ENCODE measurements at regions of chr3 and their contacts with region 1.

Region 1: DNA sequence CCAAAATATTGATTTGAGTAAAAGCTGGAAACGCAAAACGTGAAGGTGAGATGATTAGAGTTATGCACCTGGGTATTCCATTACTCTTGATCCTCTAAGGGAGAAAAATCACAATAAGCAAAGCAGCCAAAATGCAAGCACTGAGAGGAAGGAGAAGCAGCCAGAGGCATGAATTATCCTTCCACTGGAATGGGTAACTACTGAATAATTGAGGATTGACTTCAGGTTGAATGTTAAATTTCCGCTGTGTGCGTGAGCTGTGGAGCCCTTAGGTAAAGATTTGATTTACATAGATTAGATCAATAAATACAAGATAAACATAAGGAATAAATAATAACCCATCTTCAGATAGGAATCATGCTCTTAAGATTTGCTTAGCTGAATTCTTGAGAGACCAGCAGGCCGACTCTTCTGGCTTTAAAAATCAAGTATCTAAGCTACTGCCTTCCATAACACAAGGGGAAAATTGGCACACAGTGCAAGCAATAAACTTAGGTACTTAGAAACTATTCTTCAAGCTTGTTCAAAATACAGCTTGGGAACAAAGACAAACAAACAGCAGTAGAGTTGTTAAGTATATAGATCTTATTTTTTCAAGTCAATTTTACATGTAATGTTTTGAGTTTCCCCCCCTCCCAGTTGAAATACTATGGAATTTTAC is 1459.5 kb downstream of the ZPLD1 start:
- DNase-seq: no peak
- ATAC-seq: no peak
- H3K4me3 ChIP-seq: no peak overlapping the region
- H3K4me3 Mint-ChIP-seq: no peak overlapping the region
- H3K27ac ChIP-seq: no peak overlapping the region
- H3K27ac Mint-ChIP-seq: no peak overlapping the region
- H3K4me1 ChIP-seq: no peaks in the 10 kb centered on the region
- H3K4me1 Mint-ChIP-seq: no peaks in the 10 kb centered on the region
- H3K27me3 ChIP-seq: no peaks in the 10 kb centered on the region
- H3K27me3 Mint-ChIP-seq: no peaks in the 10 kb centered on the region
- CTCF ChIP-seq: no peak

Region 2: DNA sequence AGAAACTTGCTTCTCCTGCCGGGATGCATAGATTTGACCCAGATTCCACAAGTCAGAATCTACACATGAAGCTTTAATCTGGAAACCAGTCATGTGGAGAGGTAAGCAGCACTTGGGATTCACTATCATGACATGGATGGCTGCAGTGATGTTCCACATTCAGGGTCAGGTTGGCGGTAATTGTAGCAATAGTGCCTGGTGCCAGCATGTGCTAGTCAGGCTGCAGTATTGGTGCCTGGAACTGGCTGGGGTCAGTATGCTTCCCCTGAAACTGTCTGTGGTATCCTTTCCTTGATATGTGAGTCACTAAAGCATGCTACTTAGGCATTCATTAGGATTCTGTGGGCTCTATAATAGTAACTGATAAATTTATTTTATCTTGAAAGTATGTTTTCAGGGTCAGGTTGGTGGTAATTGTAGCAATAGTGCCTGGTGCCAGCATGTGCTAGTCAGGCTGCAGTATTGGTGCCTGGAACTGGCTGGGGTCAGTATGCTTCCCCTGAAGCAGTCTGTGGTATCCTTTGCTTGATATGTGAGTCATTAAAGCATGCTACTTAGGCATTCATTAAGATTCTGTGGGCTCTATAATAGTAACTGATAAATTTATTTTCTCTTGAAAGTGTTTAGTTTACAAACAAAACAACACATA is 20.3 kb before region 1 on chr3:
- CTCF ChIA-PET with region 1: no interaction called
- POLR2A ChIA-PET with region 1: no interaction called
- intact Hi-C with region 1: loop called in 1 of 2 experiments (anchors 1 kb)
- DNase-seq: no peak
- ATAC-seq: no peak
- H3K4me3 ChIP-seq: no peak overlapping the region
- H3K4me3 Mint-ChIP-seq: no peak overlapping the region
- H3K27ac ChIP-seq: no peak overlapping the region
- H3K27ac Mint-ChIP-seq: no peak overlapping the region
- H3K4me1 ChIP-seq: no peaks in the 10 kb centered on the region
- H3K4me1 Mint-ChIP-seq: no peaks in the 10 kb centered on the region
- H3K27me3 ChIP-seq: no peaks in the 10 kb centered on the region
- H3K27me3 Mint-ChIP-seq: no peaks in the 10 kb centered on the region
- CTCF ChIP-seq: no peak

Region 3: DNA sequence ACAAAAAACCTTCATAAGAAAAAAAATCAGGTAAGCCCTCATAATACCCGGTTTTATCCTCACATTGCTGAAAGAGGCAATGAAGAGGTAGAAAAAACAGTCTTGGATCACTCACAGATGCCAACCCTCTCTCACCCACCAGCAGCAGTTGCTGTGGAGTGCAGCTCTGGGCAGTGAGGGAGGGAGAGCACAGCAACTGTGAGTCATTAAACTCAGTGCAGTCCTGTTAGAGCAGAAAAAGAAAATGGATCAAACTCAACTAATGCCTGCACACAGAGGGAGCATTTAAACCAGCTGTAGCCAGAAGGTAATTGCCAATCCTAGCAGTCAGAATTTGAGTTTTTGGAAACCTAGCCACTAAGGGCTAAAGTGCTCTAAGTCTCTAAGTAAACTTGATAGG is 421.8 kb after region 1 on chr3:
- CTCF ChIA-PET with region 1: no interaction called
- POLR2A ChIA-PET with region 1: no interaction called
- intact Hi-C with region 1: no loop called
- DNase-seq: no peak
- ATAC-seq: no peak
- H3K4me3 ChIP-seq: no peak overlapping the region
- H3K4me3 Mint-ChIP-seq: no peak overlapping the region
- H3K27ac ChIP-seq: no peak overlapping the region
- H3K27ac Mint-ChIP-seq: no peak overlapping the region
- H3K4me1 ChIP-seq: no peaks in the 10 kb centered on the region
- H3K4me1 Mint-ChIP-seq: no peaks in the 10 kb centered on the region
- H3K27me3 ChIP-seq: no peaks in the 10 kb centered on the region
- H3K27me3 Mint-ChIP-seq: no peaks in the 10 kb centered on the region
- CTCF ChIP-seq: no peak

Measured in CD8-positive, alpha-beta T cell (primary cell).